ENCODE measurements at regions of chr9 and their contacts with region 1.

Region 1: GRCh38 chr9:15295761-15296405 is 11.1 kb downstream of the TTC39B start:
- DNase-seq: no peak
- H3K4me3 Mint-ChIP-seq: peak overlapping the region; percentile 70
- H3K27ac Mint-ChIP-seq: peak overlapping the region; percentile 98
- H3K4me1 Mint-ChIP-seq: peaks cover 71% of the 10 kb centered on the region
- H3K27me3 Mint-ChIP-seq: no peaks in the 10 kb centered on the region

Region 2: GRCh38 chr9:14993061-14993800 is 302.7 kb before region 1 on chr9:
- intact Hi-C with region 1: loop called (anchors 5 kb)
- DNase-seq: no peak
- H3K4me3 Mint-ChIP-seq: peak overlapping the region; percentile 64
- H3K27ac Mint-ChIP-seq: no peak overlapping the region
- H3K4me1 Mint-ChIP-seq: peaks cover 25% of the 10 kb centered on the region
- H3K27me3 Mint-ChIP-seq: peaks cover 10% of the 10 kb centered on the region

Region 3: GRCh38 chr9:15277400-15278090 is 18.3 kb before region 1 on chr9:
- intact Hi-C with region 1: loop called (anchors 2 kb)
- DNase-seq: no peak
- H3K4me3 Mint-ChIP-seq: no peak overlapping the region
- H3K27ac Mint-ChIP-seq: no peak overlapping the region
- H3K4me1 Mint-ChIP-seq: peaks cover 15% of the 10 kb centered on the region
- H3K27me3 Mint-ChIP-seq: no peaks in the 10 kb centered on the region

Region 4: GRCh38 chr9:15370466-15371447 is 74.9 kb after region 1 on chr9:
- intact Hi-C with region 1: no loop called
- DNase-seq: no peak
- H3K4me3 Mint-ChIP-seq: no peak overlapping the region
- H3K27ac Mint-ChIP-seq: no peak overlapping the region
- H3K4me1 Mint-ChIP-seq: no peaks in the 10 kb centered on the region
- H3K27me3 Mint-ChIP-seq: peaks cover 8% of the 10 kb centered on the region

Region 5: GRCh38 chr9:15422372-15423230 is 126.7 kb after region 1 on chr9 and contains the start of gene SNAPC3:
- intact Hi-C with region 1: loop called (anchors 1 kb)
- DNase-seq: peak; percentile 94
- H3K4me3 Mint-ChIP-seq: peak within 1 kb of the TSS; percentile 95
- H3K27ac Mint-ChIP-seq: peak within 1 kb of the TSS; percentile 88
- H3K4me1 Mint-ChIP-seq: peaks cover 40% of the 10 kb centered on the region
- H3K27me3 Mint-ChIP-seq: peaks cover 5% of the 10 kb centered on the region
- total RNA-seq, gene SNAPC3: 34.0 and 34.7 TPM in 2 replicates

Region 6: DNA sequence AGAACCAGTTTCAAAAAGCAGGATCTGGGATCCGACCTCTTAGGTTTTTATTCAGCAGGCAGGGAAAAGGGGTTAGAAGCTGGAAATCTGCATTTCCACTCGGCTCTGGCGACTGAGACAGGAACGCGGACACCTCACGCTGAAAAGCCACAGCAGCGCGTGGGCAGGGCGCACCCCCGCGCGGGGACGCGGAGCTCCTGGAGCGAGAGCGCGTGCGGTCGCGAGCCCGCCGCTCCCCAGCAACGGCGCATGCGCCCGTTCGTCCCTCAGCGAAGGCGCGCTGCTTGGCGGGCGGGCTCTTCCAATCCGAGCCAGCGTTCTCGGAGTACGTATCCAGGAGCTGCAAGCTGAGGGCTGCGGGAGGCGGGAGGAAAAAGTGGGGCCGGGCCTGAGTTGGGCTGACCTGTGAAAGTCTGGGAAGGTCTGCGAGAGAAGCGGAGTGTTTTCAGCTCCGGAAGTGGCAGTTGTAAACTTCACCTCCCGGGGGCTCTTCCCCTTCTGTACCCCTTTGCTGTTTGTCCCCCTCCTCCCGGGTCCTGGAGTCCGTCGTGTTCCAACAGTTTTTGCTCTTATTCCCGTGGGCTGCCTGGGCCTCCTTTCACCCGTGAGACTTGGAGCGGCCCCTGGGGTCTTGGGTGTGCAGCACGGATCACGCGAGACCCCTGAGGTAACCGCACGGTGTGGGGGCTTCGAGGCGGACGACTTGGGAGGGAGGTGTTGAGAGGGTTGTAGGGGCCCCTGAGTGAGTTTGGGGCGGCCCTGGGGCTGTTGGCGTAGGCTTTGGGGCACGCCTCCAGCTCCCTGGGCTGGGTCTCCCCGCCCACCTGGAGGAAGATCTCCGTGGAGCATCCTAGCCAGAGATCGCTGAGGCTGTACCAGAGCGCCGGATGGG is 257.0 kb after region 1 on chr9 and contains the start of gene CCDC171:
- intact Hi-C with region 1: loop called (anchors 5 kb)
- DNase-seq: peak; percentile 84
- H3K4me3 Mint-ChIP-seq: peak within 1 kb of the TSS; percentile 87
- H3K27ac Mint-ChIP-seq: peak within 1 kb of the TSS; percentile 73
- H3K4me1 Mint-ChIP-seq: peaks cover 9% of the 10 kb centered on the region
- H3K27me3 Mint-ChIP-seq: peaks cover 14% of the 10 kb centered on the region
- total RNA-seq, gene CCDC171: 1.8 and 2.0 TPM in 2 replicates

Measured in activated T-helper 2 cell treated with anti-CD3 and anti-CD28 coated beads, Interferon-gamma antibody, Interleukin-2, Interleukin-4, amounts not matched to agents 10 μg/mL and 5 μg/mL and 100 μg/mL, durations not matched to agents 14 hours and 24 hours and 36 hours (primary cell).